Naive thymus-derived CD4-positive, alpha-beta T cell (primary cell): ENCODE measurements at regions of chr1 and their contacts with region 1.

Region 1: DNA sequence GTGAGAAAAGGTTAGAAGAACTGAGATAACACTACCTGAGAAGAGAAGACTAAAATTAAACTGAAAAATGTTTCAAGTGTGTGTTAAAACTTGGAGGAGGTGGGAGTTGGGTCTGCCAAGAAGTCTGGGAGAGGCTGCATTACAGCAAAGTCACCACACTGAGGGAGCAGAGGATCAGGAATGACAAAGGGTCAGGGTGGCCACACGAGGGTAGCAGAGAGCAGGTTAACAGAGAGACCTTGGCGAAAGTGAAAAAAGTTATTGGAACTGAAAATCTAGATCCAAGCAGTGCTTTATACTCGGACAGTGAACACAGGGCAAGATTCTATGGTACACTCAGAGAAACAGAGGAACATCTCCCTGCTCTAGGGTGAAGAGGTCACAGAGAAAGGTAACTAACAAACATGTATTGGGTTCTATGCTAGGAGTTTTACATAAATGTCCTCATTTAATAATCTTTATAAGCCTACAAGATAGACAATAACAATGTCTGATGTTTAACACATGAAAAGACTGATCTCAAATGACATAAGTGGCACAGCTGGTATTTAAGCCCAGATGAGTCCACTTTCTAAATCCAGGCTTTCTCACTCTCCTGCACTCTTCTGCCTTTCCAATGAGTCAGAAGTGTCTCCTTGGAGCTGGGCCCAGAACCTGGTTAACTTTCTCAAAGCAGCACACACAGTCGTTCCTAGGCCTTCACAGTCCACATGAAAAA is 10.3 kb upstream of the CADM3 start:
- DNase-seq: peak; percentile 15 to 63 (median 40)
- ATAC-seq: peak; percentile 93
- H3K4me3 ChIP-seq: no peak overlapping the region
- H3K4me3 Mint-ChIP-seq: peak overlapping the region in 2 of 10 donors; percentile 2 to 5
- H3K27ac ChIP-seq: no peak overlapping the region
- H3K27ac Mint-ChIP-seq: no peak overlapping the region
- H3K4me1 ChIP-seq: no peaks in the 10 kb centered on the region
- H3K4me1 Mint-ChIP-seq: peaks cover 0 to 8% (median 2%) of the 10 kb centered on the region in 7 donors
- H3K27me3 ChIP-seq: peaks cover 3 to 4% of the 10 kb centered on the region in 2 donors
- H3K27me3 Mint-ChIP-seq: peaks cover 35 to 71% (median 48%) of the 10 kb centered on the region in 5 donors

Region 2: GRCh38 chr1:159197561-159198557 is 36.7 kb after region 1 on chr1:
- CTCF ChIA-PET with region 1: interaction called, 3 read pairs
- POLR2A ChIA-PET with region 1: no interaction called
- intact Hi-C with region 1: loop called in 1 of 2 experiments (anchors 1 kb)
- DNase-seq: peak in 1 of 9 donors; percentile 43
- ATAC-seq: peak; percentile 68
- H3K4me3 ChIP-seq: no peak overlapping the region
- H3K4me3 Mint-ChIP-seq: no peak overlapping the region
- H3K27ac ChIP-seq: no peak overlapping the region
- H3K27ac Mint-ChIP-seq: no peak overlapping the region
- H3K4me1 ChIP-seq: no peaks in the 10 kb centered on the region
- H3K4me1 Mint-ChIP-seq: peaks cover 0 to 13% (median 5%) of the 10 kb centered on the region in 7 donors
- H3K27me3 ChIP-seq: no peaks in the 10 kb centered on the region
- H3K27me3 Mint-ChIP-seq: peaks cover 24 to 77% (median 51%) of the 10 kb centered on the region in 5 donors

Region 3: DNA sequence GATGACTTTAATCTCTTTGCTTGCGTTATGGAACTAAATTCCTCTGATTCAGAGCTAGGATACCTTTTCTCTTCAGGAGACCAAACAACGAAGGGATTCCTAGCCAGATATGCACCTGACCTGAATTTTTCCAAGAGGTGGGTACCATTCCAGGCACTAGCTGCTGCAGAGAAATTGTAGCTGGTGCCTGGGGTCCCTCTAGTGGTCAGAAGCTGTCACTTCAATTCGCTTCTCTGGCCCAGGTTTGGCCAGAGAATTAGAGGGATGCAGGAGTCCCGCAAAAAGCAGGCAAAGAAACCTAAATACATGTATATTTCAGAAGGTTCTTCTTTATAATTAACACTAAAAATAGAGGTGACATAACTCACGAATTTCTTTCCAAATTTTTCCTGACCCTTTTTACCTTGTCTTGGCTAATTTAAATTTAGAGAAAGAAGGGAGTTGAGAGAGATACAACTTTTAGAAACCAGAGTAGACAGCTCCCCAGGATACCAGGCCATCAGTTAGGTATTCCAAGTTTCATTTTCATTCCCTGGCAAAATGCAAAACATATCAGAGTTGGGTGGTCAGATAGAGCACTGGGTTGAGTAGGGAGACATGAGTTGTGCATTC is 53.1 kb after region 1 on chr1:
- CTCF ChIA-PET with region 1: interaction called, 6 read pairs
- POLR2A ChIA-PET with region 1: no interaction called
- intact Hi-C with region 1: loop called (anchors 1 kb)
- DNase-seq: peak in 5 of 9 donors; percentile 1 to 40 (median 21)
- ATAC-seq: peak; percentile 58
- H3K4me3 ChIP-seq: no peak overlapping the region
- H3K4me3 Mint-ChIP-seq: no peak overlapping the region
- H3K27ac ChIP-seq: no peak overlapping the region
- H3K27ac Mint-ChIP-seq: no peak overlapping the region
- H3K4me1 ChIP-seq: no peaks in the 10 kb centered on the region
- H3K4me1 Mint-ChIP-seq: peaks cover 0 to 3% (median 0%) of the 10 kb centered on the region in 7 donors
- H3K27me3 ChIP-seq: no peaks in the 10 kb centered on the region
- H3K27me3 Mint-ChIP-seq: peaks cover 23 to 71% (median 37%) of the 10 kb centered on the region in 5 donors

Region 4: GRCh38 chr1:159798893-159799292 is 637.7 kb after region 1 on chr1:
- CTCF ChIA-PET with region 1: no interaction called
- POLR2A ChIA-PET with region 1: no interaction called
- intact Hi-C with region 1: loop called in 1 of 2 experiments (anchors 10 kb)
- DNase-seq: peak in 8 of 9 donors; percentile 11 to 52 (median 34)
- ATAC-seq: peak; percentile 66
- H3K4me3 ChIP-seq: no peak overlapping the region
- H3K4me3 Mint-ChIP-seq: no peak overlapping the region
- H3K27ac ChIP-seq: no peak overlapping the region
- H3K27ac Mint-ChIP-seq: no peak overlapping the region
- H3K4me1 ChIP-seq: peaks cover 8 to 48% of the 10 kb centered on the region in 2 donors
- H3K4me1 Mint-ChIP-seq: peaks cover 13 to 24% (median 16%) of the 10 kb centered on the region in 7 donors
- H3K27me3 ChIP-seq: no peaks in the 10 kb centered on the region
- H3K27me3 Mint-ChIP-seq: peaks cover 0 to 55% (median 3%) of the 10 kb centered on the region in 5 donors

Region 5: GRCh38 chr1:159945483-159946241 is 784.5 kb after region 1 on chr1 and contains the start of gene IGSF9:
- CTCF ChIA-PET with region 1: no interaction called
- POLR2A ChIA-PET with region 1: no interaction called
- intact Hi-C with region 1: loop called in 1 of 2 experiments (anchors 5 kb)
- DNase-seq: peak in 8 of 9 donors; percentile 60 to 84 (median 76)
- ATAC-seq: peak; percentile 95
- H3K4me3 ChIP-seq: peak within 1 kb of the TSS; percentile 57
- H3K4me3 Mint-ChIP-seq: peak within 1 kb of the TSS; percentile 50 to 79 (median 72)
- H3K27ac ChIP-seq: no peak within 1 kb of the TSS
- H3K27ac Mint-ChIP-seq: peak within 1 kb of the TSS in 3 of 9 donors; percentile 9 to 69 (median 17)
- H3K4me1 ChIP-seq: peaks cover 4 to 7% of the 10 kb centered on the region in 2 donors
- H3K4me1 Mint-ChIP-seq: peaks cover 8 to 18% (median 14%) of the 10 kb centered on the region in 7 donors
- H3K27me3 ChIP-seq: peaks cover 8 to 11% of the 10 kb centered on the region in 2 donors
- H3K27me3 Mint-ChIP-seq: peaks cover 23 to 73% (median 30%) of the 10 kb centered on the region in 5 donors
- total RNA-seq, gene IGSF9: 0.12 TPM in 1 of 5 experiments, not detected in the others

Region 6: GRCh38 chr1:160006312-160006940 is 845.3 kb after region 1 on chr1:
- CTCF ChIA-PET with region 1: interaction called, 5 read pairs
- POLR2A ChIA-PET with region 1: no interaction called
- intact Hi-C with region 1: loop called (anchors 1 to 10 kb)
- DNase-seq: peak; percentile 38 to 67 (median 61)
- ATAC-seq: peak; percentile 88
- H3K4me3 ChIP-seq: no peak overlapping the region
- H3K4me3 Mint-ChIP-seq: no peak overlapping the region
- H3K27ac ChIP-seq: no peak overlapping the region
- H3K27ac Mint-ChIP-seq: no peak overlapping the region
- H3K4me1 ChIP-seq: no peaks in the 10 kb centered on the region
- H3K4me1 Mint-ChIP-seq: no peaks in the 10 kb centered on the region
- H3K27me3 ChIP-seq: no peaks in the 10 kb centered on the region
- H3K27me3 Mint-ChIP-seq: peaks cover 0 to 33% (median 6%) of the 10 kb centered on the region in 5 donors